ENCODE measurements at regions of chr14 and their contacts with region 1.

Region 1: DNA sequence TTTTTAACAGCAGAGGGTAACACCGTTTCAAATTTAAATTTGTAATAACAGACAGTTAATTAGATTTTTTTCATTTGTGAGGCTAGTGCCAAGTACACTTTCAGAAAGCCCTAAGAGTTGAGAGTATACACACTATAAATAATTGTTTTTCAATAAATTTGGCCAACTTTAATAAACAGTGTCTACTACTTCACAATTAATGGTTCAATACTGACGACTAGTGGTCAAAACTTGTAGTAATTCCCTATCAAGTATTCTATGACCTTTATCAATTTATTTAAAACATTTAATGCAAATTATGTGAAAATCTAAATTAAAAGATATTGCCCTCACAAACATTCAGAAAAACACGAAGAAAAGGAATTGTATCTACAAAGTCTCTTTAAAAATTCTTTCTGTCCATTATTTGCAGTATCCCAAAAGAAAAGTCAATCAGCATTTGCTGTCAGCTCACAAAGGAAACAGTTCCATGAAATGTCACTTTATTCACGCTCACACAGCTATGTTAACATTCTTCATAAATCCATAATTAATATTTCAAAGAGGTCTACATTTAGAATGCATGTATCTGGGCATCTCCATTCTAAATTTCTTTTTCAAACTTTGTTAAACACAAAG is 91.2 kb downstream of the CEP128 start:
- H3K4me3 Mint-ChIP-seq: no peak overlapping the region
- H3K27ac Mint-ChIP-seq: no peak overlapping the region
- H3K4me1 Mint-ChIP-seq: no peaks in the 10 kb centered on the region
- H3K27me3 Mint-ChIP-seq: no peaks in the 10 kb centered on the region

Region 2: DNA sequence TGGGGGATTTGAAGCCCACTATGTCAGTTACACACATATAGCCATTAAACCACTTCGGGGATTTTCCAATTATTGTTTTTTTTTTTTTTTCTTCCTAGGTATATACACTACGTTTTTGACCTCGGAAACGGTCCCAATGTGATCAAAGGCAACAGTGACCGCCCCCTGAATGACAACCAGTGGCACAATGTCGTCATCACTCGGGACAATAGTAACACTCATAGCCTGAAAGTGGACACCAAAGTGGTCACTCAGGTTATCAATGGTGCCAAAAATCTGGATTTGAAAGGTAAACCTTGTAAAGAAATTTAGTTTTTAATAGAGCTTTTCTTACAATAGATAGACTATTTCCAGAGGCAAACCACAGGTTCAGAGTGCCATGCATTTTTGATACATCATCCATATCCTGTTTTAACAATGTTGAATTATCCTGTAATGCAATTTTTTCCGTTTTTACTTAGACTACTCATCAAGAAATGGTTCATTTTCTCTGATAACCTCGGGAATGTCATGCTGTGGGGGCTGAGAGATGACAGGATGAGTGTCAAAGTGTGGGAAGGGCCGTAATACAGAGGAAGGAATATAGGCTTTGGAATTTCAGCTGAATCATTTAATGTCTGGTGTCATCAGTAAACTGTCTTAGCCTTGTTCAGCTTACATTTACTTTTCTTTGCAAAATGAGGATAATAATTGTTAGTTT is 1883.0 kb before region 1 on chr14:
- intact Hi-C with region 1: loop called (anchors 2 kb)
- H3K4me3 Mint-ChIP-seq: no peak overlapping the region
- H3K27ac Mint-ChIP-seq: no peak overlapping the region
- H3K4me1 Mint-ChIP-seq: no peaks in the 10 kb centered on the region
- H3K27me3 Mint-ChIP-seq: peaks cover 4% of the 10 kb centered on the region

Region 3: DNA sequence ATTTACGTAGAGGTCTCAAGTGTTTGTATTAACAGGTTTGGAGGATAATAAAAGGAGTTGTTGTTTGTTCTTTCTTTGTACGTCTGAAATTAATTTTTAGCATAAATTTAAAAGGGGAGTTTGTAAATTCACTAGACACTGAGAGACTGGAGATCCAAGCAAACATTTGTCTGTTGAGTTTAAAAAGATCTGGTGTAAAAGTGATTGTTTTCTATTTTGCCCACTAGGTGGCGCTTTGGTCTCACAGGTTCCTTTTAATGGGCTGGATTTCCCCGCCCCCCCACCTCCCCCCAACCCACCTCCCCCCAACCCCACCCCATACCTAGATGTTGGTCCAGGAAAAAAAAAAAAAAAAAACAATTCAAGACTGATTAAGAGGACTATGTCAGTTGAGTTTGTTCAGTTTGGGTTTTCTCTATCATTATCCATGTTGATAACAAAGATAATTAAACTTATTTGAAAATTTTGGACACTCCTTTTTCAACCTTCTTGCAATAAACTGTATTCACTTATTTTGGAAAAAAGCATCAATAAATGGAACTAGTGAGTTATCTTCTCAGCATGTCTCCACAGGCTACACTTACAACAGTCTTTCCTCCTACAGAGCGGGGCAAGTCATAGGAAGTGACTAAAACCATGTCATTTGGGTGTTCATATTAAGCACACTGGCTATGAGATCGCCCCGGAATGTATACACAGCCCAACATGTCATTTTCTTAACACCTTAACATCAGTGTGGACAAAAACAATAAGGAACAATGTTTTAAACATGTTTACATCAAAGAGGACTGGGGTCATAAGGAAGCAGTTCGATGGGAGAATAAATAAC is 1839.0 kb before region 1 on chr14:
- intact Hi-C with region 1: loop called (anchors 1 kb)
- H3K4me3 Mint-ChIP-seq: no peak overlapping the region
- H3K27ac Mint-ChIP-seq: no peak overlapping the region
- H3K4me1 Mint-ChIP-seq: no peaks in the 10 kb centered on the region
- H3K27me3 Mint-ChIP-seq: peaks cover 2% of the 10 kb centered on the region

Region 4: DNA sequence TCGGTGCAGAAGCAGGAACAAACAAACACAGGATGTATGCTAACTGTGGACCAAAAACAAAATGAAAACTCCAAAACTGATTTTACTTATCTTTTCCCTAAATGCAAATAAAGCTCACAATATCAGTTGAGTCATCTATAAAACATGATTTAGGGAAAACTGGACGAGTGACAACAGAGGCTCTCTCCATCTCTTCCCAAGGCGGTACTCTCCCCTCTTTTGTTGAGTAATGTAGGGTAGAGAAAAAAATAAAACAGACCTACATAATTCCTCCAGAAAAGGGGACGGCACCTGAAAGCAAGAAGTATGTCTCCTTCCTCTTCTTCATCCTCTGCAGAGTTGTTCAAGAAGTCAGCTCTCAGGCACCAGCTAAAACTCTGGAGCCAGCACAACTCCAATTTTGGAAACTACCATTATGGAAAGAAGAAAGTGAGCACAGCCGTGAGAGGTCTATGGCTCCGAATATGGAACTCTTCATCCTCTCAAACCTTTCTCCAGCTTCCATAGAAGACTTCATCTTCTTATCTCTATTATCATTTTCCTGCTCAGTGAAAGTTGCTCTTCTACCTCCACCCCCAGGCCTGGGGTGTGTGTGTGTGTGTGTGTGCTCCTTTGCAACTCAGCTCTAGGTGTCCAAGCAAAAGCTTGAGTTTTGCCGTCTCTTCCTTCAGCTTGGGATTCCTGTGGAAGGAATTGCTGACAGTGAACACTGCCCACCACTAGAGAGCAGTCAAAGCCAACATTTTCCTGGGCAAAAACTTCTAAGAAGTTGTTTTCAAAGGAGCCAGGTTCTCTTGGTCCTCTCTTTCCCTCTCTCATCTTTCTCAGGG is 794.4 kb before region 1 on chr14:
- intact Hi-C with region 1: loop called (anchors 10 kb)
- H3K4me3 Mint-ChIP-seq: no peak overlapping the region
- H3K27ac Mint-ChIP-seq: no peak overlapping the region
- H3K4me1 Mint-ChIP-seq: no peaks in the 10 kb centered on the region
- H3K27me3 Mint-ChIP-seq: no peaks in the 10 kb centered on the region

Region 5: GRCh38 chr14:80202888-80203562 is 647.3 kb before region 1 on chr14:
- intact Hi-C with region 1: loop called (anchors 5 kb)
- H3K4me3 Mint-ChIP-seq: no peak overlapping the region
- H3K27ac Mint-ChIP-seq: no peak overlapping the region
- H3K4me1 Mint-ChIP-seq: no peaks in the 10 kb centered on the region
- H3K27me3 Mint-ChIP-seq: no peaks in the 10 kb centered on the region

Region 6: GRCh38 chr14:80213599-80213998 is 636.7 kb before region 1 on chr14:
- intact Hi-C with region 1: loop called (anchors 5 kb)
- H3K4me3 Mint-ChIP-seq: no peak overlapping the region
- H3K27ac Mint-ChIP-seq: no peak overlapping the region
- H3K4me1 Mint-ChIP-seq: no peaks in the 10 kb centered on the region
- H3K27me3 Mint-ChIP-seq: no peaks in the 10 kb centered on the region

Region 7: DNA sequence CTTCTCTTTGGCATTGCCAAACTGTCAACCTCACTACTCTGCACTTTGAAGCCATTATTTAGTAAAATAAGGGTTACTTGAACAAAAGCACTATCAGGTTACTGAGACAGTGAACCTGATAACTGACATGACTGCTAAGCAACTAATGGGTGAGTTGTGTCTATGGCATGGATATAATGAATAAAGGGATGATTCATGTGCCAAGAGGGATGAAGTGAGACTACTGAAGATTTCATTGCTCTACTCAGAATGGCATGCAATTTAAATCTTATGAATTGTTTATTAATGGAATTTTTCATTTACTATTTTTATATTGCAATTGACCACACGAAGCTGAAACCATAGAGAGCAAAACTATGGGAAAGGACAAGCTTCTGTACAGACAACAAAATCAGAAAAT is 16.8 kb after region 1 on chr14:
- intact Hi-C with region 1: no loop called
- H3K4me3 Mint-ChIP-seq: no peak overlapping the region
- H3K27ac Mint-ChIP-seq: no peak overlapping the region
- H3K4me1 Mint-ChIP-seq: no peaks in the 10 kb centered on the region
- H3K27me3 Mint-ChIP-seq: no peaks in the 10 kb centered on the region